ENCODE measurements at regions of chr3 and their contacts with region 1.

Region 1: DNA sequence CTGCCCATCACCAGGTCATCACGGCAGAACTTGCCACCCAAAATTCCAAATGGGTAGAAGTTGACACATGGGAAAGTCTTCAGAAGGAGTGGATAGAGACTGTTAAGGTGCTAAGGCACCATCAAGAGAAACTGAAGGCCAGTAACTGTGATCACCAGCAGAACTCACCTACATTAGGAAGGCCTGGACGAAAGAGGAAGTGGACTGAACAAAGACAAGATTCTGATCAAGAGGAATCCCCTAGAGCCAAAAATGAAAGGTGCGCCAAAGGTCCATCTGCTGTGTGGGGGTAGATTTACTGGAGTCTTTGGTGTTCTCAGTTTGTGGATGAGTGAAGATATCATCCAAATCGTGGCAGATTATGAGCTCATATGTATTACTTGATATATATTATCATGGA is 46.3 kb upstream of the P3H2 start:
- DNase-seq: no peak
- H3K4me3 ChIP-seq: no peak overlapping the region
- H3K27ac ChIP-seq: no peak overlapping the region
- H3K4me1 ChIP-seq: no peaks in the 10 kb centered on the region
- H3K27me3 ChIP-seq: no peaks in the 10 kb centered on the region
- CTCF ChIP-seq: no peak

Region 2: GRCh38 chr3:190130037-190130436 is 36.9 kb before region 1 on chr3:
- CTCF ChIA-PET with region 1: interaction called, 15 read pairs
- POLR2A ChIA-PET with region 1: no interaction called
- intact Hi-C with region 1: no loop called
- DNase-seq: no peak
- H3K4me3 ChIP-seq: no peak overlapping the region
- H3K27ac ChIP-seq: no peak overlapping the region
- H3K4me1 ChIP-seq: no peaks in the 10 kb centered on the region; the same call in 1 of the 2 replicates
- H3K27me3 ChIP-seq: no peaks in the 10 kb centered on the region
- CTCF ChIP-seq: no peak